Heart left ventricle (tissue), 16 donors: ENCODE measurements at regions of chr6 and their contacts with region 1.

Region 1: GRCh38 chr6:73732845-73733675 is 37.1 kb downstream of the CD109 start:
- DNase-seq: peak; percentile 56 to 73 (median 68)
- ATAC-seq: peak; percentile 62 to 94 (median 91)
- H3K4me3 ChIP-seq: no peak overlapping the region
- H3K27ac ChIP-seq: no peak overlapping the region
- H3K4me1 ChIP-seq: peaks cover 0 to 2% (median 0%) of the 10 kb centered on the region in 12 donors
- H3K27me3 ChIP-seq: no peaks in the 10 kb centered on the region
- CTCF ChIP-seq: peak; percentile 84 to 95 (median 90)
- POLR2A ChIP-seq: no peak

Region 2: GRCh38 chr6:73675466-73676098 is 57.5 kb before region 1 on chr6:
- intact Hi-C with region 1: loop called (anchors 1 to 2 kb)
- DNase-seq: peak; percentile 68 to 77 (median 72)
- ATAC-seq: peak; percentile 69 to 91 (median 88)
- H3K4me3 ChIP-seq: no peak overlapping the region
- H3K27ac ChIP-seq: no peak overlapping the region
- H3K4me1 ChIP-seq: peaks cover 0 to 11% (median 0%) of the 10 kb centered on the region in 12 donors
- H3K27me3 ChIP-seq: no peaks in the 10 kb centered on the region
- CTCF ChIP-seq: peak; percentile 86 to 96 (median 91)
- POLR2A ChIP-seq: no peak